Panc1 (cell line): ENCODE measurements at regions of chr1 and their contacts with region 1.

Region 1: GRCh38 chr1:181626279-181626938 is 143.1 kb downstream of the CACNA1E start:
- DNase-seq: no peak
- ATAC-seq: no peak
- H3K4me3 ChIP-seq: no peak overlapping the region
- H3K27ac ChIP-seq: no peak overlapping the region
- H3K4me1 ChIP-seq: no peaks in the 10 kb centered on the region
- H3K27me3 ChIP-seq: peaks cover 3% of the 10 kb centered on the region; the same call in 1 of the 2 replicates
- CTCF ChIP-seq: no peak

Region 2: GRCh38 chr1:181604482-181605249 is 21.7 kb before region 1 on chr1:
- CTCF ChIA-PET with region 1: no interaction called
- POLR2A ChIA-PET with region 1: interaction called, 11 read pairs
- in situ Hi-C with region 1: no loop called
- intact Hi-C with region 1: no loop called
- DNase-seq: no peak
- ATAC-seq: no peak
- H3K4me3 ChIP-seq: no peak overlapping the region
- H3K27ac ChIP-seq: no peak overlapping the region
- H3K4me1 ChIP-seq: no peaks in the 10 kb centered on the region
- H3K27me3 ChIP-seq: no peaks in the 10 kb centered on the region; the same call in 1 of the 2 replicates
- CTCF ChIP-seq: no peak